Posterior cingulate gyrus (tissue), 11 donors: ENCODE measurements at regions of chr9 and their contacts with region 1.

Region 1: GRCh38 chr9:22238809-22239684 is 207.6 kb upstream of the DMRTA1 start:
- DNase-seq: no peak

Region 2: DNA sequence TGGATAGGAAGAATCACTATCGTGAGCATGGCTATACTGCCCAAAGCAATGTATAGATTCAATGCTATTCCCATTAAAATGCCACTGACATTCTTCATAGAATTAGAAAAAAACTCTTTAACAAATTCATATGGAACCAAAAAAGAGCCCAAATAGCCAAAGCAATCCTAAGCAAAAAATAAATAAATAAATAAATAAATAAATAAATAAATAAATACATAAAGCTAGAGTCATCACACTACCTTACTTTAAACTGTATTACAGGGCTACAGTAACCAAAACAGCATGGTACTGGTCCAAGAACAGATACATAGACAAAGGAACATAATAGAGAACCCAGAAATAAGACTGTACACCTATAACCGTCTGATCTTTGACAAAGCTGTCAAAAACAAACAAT is 49.6 kb before region 1 on chr9:
- intact Hi-C with region 1: no loop called
- DNase-seq: no peak

Region 3: GRCh38 chr9:22446950-22447617 is 208.0 kb after region 1 on chr9:
- intact Hi-C with region 1: loop called (anchors 2 kb)
- DNase-seq: peak; percentile 24 to 94 (median 46)